Common myeloid progenitor, CD34-positive (primary cell): ENCODE measurements at regions of chr7 and their contacts with region 1.

Region 1: GRCh38 chr7:77657427-77658224 is 38.6 kb upstream of the RSBN1L start:
- DNase-seq: peak; percentile 64 to 75 (median 70)
- H3K4me3 ChIP-seq: no peak overlapping the region
- H3K27ac ChIP-seq: no peak overlapping the region
- H3K4me1 ChIP-seq: no peaks in the 10 kb centered on the region
- H3K27me3 ChIP-seq: no peaks in the 10 kb centered on the region

Region 2: DNA sequence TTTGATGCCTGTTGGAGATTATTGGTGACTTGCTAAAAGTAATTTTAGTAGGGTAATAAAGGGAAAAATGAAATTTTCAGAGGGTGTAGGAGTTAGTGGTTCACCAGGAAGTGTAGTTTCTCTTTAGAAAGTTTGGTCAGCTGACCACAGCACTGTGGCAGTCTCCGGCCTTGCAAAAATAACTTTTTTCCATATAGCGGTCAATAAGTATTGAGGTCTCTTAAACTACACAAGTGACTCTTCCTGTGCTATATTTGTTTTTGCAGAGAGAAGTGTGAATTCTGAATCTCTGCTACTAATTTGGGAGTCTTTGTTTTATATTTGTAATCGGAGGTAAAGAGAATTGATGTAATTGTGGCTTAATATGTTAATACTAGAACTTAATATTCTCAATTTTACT is 96.3 kb before region 1 on chr7:
- CTCF ChIA-PET with region 1: no interaction called
- POLR2A ChIA-PET with region 1: no interaction called
- DNase-seq: no peak
- H3K4me3 ChIP-seq: no peak overlapping the region
- H3K27ac ChIP-seq: no peak overlapping the region
- H3K4me1 ChIP-seq: peaks cover 0 to 10% (median 3%) of the 10 kb centered on the region in 4 experiments
- H3K27me3 ChIP-seq: no peaks in the 10 kb centered on the region

Region 3: GRCh38 chr7:77765906-77766800 is 108.5 kb after region 1 on chr7:
- CTCF ChIA-PET with region 1: interaction called, 78 read pairs
- POLR2A ChIA-PET with region 1: no interaction called
- DNase-seq: no peak
- H3K4me3 ChIP-seq: no peak overlapping the region
- H3K27ac ChIP-seq: no peak overlapping the region
- H3K4me1 ChIP-seq: peaks cover 2 to 7% (median 3%) of the 10 kb centered on the region in 4 experiments
- H3K27me3 ChIP-seq: no peaks in the 10 kb centered on the region

Region 4: DNA sequence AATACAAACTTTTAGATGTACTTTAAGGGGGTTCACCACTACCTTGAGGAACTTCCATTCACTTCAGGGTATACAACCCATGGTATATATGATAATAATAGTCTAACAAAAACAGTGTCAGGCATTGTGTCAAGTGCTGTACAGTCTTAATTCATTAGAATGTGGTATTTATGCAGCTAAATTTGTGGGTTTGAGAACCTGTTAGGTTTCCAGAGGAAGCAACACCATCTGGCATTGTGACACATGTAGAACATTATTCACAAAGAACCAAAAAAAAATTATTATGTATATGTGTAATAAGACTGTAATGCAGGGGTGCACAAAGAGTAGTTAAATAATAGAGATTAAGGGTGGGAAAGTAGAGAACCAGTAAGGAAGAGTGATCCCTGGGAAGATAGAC is 114.3 kb after region 1 on chr7:
- CTCF ChIA-PET with region 1: interaction called, 10 read pairs
- POLR2A ChIA-PET with region 1: no interaction called
- DNase-seq: peak in 2 of 3 donors; percentile 49 to 68
- H3K4me3 ChIP-seq: no peak overlapping the region
- H3K27ac ChIP-seq: no peak overlapping the region
- H3K4me1 ChIP-seq: peaks cover 0 to 6% (median 0%) of the 10 kb centered on the region in 4 experiments
- H3K27me3 ChIP-seq: no peaks in the 10 kb centered on the region